Naive thymus-derived CD4-positive, alpha-beta T cell (primary cell): ENCODE measurements at regions of chrX and their contacts with region 1.

Region 1: DNA sequence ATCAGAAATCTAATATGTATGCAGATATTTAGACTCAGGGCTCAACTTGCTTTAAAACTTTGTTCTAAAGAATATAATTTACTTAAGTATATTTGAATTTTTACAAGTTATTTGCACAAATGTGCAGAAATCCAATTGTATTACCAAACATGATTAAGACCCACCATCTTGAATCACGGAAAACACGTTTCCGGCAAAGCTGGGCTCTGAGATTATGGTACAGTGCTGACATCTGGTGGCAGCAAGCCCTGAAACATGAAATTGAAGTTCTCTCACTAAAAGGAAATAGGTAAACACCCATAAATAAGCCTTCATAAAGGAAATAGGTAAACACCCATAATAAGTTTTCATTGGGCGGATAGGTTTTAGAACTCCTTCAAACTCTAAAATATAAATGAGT is 98.3 kb upstream of the MAOA start:
- DNase-seq: peak; percentile 7 to 65 (median 40)
- ATAC-seq: peak; percentile 53
- H3K4me3 ChIP-seq: no peak overlapping the region
- H3K4me3 Mint-ChIP-seq: no peak overlapping the region
- H3K27ac ChIP-seq: no peak overlapping the region
- H3K27ac Mint-ChIP-seq: no peak overlapping the region
- H3K4me1 ChIP-seq: peaks cover 4% of the 10 kb centered on the region in 2 donors
- H3K4me1 Mint-ChIP-seq: peaks cover 0 to 6% (median 0%) of the 10 kb centered on the region in 7 donors
- H3K27me3 ChIP-seq: no peaks in the 10 kb centered on the region
- H3K27me3 Mint-ChIP-seq: no peaks in the 10 kb centered on the region

Region 2: GRCh38 chrX:41781502-41781901 is 1776.3 kb before region 1 on chrX:
- CTCF ChIA-PET with region 1: interaction called, 4 read pairs
- POLR2A ChIA-PET with region 1: no interaction called
- intact Hi-C with region 1: loop called in 1 of 2 experiments (anchors 1 kb)
- DNase-seq: peak in 6 of 9 donors; percentile 12 to 34 (median 24)
- ATAC-seq: peak; percentile 67
- H3K4me3 ChIP-seq: no peak overlapping the region
- H3K4me3 Mint-ChIP-seq: peak overlapping the region in 1 of 10 donors; percentile 6
- H3K27ac ChIP-seq: no peak overlapping the region
- H3K27ac Mint-ChIP-seq: peak overlapping the region in 1 of 9 donors; percentile 70
- H3K4me1 ChIP-seq: no peaks in the 10 kb centered on the region
- H3K4me1 Mint-ChIP-seq: peaks cover 0 to 24% (median 7%) of the 10 kb centered on the region in 7 donors
- H3K27me3 ChIP-seq: no peaks in the 10 kb centered on the region
- H3K27me3 Mint-ChIP-seq: no peaks in the 10 kb centered on the region

Region 3: DNA sequence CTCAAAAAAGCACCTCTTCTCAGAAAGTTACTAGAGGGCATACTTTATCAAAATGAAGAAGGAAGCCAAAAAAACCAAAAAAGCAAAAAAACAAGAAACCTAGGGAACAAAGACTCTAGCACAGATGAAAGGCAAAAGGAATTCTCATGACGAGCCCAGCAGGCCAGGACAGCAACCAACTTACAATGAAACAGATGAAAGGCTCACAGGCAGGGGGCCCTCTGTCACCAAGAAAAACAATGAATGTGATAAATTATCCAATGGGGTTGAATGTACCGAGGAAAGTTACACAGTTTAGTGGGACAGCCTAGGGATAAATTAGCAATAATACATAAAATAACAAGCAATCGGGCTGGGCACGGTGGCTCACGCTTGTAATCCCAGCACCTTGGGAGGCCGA is 1754.8 kb before region 1 on chrX:
- CTCF ChIA-PET with region 1: interaction called, 7 read pairs
- POLR2A ChIA-PET with region 1: no interaction called
- intact Hi-C with region 1: loop called (anchors 1 to 5 kb)
- DNase-seq: no peak
- ATAC-seq: no peak
- H3K4me3 ChIP-seq: no peak overlapping the region
- H3K4me3 Mint-ChIP-seq: no peak overlapping the region
- H3K27ac ChIP-seq: no peak overlapping the region
- H3K27ac Mint-ChIP-seq: peak overlapping the region in 1 of 9 donors; percentile 3
- H3K4me1 ChIP-seq: peaks cover 0 to 3% of the 10 kb centered on the region in 2 donors
- H3K4me1 Mint-ChIP-seq: peaks cover 5 to 45% (median 16%) of the 10 kb centered on the region in 7 donors
- H3K27me3 ChIP-seq: no peaks in the 10 kb centered on the region
- H3K27me3 Mint-ChIP-seq: no peaks in the 10 kb centered on the region

Region 4: GRCh38 chrX:42776195-42776594 is 781.6 kb before region 1 on chrX:
- CTCF ChIA-PET with region 1: no interaction called
- POLR2A ChIA-PET with region 1: no interaction called
- intact Hi-C with region 1: loop called in 1 of 2 experiments (anchors 5 kb)
- DNase-seq: no peak
- ATAC-seq: no peak
- H3K4me3 ChIP-seq: no peak overlapping the region
- H3K4me3 Mint-ChIP-seq: no peak overlapping the region
- H3K27ac ChIP-seq: no peak overlapping the region
- H3K27ac Mint-ChIP-seq: peak overlapping the region in 3 of 9 donors; percentile 4 to 39 (median 6)
- H3K4me1 ChIP-seq: no peaks in the 10 kb centered on the region
- H3K4me1 Mint-ChIP-seq: peaks cover 0 to 15% (median 10%) of the 10 kb centered on the region in 7 donors
- H3K27me3 ChIP-seq: no peaks in the 10 kb centered on the region
- H3K27me3 Mint-ChIP-seq: no peaks in the 10 kb centered on the region

Region 5: DNA sequence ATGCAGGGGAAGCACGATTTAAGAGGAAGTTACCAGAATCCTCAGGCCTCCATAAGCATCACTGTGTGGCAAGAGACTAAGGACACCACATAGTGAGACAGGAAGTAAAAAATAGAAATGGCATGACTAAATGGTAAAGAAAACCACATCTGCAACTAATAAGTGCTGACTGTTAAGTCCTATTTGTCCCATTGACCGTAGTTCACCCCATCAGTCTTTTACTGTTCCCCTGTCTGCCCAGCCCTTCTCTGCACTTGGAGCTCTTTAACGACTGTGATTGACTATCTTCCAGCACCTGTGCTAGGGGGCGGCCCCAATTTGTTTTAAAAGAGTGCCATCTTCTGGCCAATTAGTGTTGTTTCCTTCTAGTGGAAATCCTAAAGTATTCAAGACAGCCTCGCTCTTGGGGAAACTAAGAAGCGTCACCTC is 192.5 kb after region 1 on chrX:
- CTCF ChIA-PET with region 1: interaction called, 7 read pairs
- POLR2A ChIA-PET with region 1: no interaction called
- intact Hi-C with region 1: loop called (anchors 1 kb)
- DNase-seq: peak in 8 of 9 donors; percentile 18 to 65 (median 40)
- ATAC-seq: peak; percentile 72
- H3K4me3 ChIP-seq: no peak overlapping the region
- H3K4me3 Mint-ChIP-seq: no peak overlapping the region
- H3K27ac ChIP-seq: no peak overlapping the region
- H3K27ac Mint-ChIP-seq: no peak overlapping the region
- H3K4me1 ChIP-seq: no peaks in the 10 kb centered on the region
- H3K4me1 Mint-ChIP-seq: peaks cover 0 to 7% (median 0%) of the 10 kb centered on the region in 7 donors
- H3K27me3 ChIP-seq: no peaks in the 10 kb centered on the region
- H3K27me3 Mint-ChIP-seq: no peaks in the 10 kb centered on the region